CD8-positive, alpha-beta T cell (primary cell): ENCODE measurements at regions of chr21 and their contacts with region 1.

Region 1: DNA sequence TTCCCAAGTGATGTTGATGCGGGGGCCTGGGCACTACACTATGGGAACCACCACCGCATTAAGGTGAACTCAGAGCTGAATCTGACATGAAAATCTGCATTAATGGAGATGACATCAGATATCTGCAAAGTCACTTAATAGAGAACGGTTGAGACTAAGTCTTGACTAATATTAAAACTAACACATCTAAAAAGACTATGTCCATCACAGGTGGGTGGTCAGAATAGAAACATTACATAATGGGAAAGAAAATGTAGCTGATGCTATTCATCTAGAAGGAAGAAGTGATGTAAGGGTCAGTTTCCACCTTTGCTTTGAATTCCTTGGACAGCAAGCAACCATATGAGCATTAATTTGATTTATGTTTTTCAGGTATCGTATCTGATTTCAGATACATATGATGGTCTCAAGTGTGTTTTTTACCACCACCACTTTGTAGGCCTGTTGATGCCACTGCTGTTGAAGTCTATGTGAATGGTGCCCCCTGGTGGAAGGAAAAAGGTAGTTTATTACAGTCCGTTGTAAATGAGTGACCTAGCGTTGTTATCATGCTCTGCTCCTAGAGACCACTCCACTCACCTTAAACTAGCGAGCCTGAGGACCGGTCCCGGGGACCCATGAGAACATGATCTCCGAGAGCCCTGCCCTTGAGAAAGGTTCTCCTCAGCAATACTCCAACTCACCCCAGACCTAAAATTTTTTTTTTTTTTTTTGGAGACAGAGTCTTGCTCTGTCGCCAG is 73.5 kb downstream of the BACH1 start:
- DNase-seq: peak in 8 of 9 experiments; percentile 26 to 83 (median 53)
- ATAC-seq: peak; percentile 79
- H3K4me3 ChIP-seq: no peak overlapping the region
- H3K4me3 Mint-ChIP-seq: no peak overlapping the region
- H3K27ac ChIP-seq: no peak overlapping the region
- H3K27ac Mint-ChIP-seq: no peak overlapping the region
- H3K4me1 ChIP-seq: peaks cover 9% of the 10 kb centered on the region
- H3K4me1 Mint-ChIP-seq: peaks cover 10% of the 10 kb centered on the region
- H3K27me3 ChIP-seq: no peaks in the 10 kb centered on the region
- H3K27me3 Mint-ChIP-seq: no peaks in the 10 kb centered on the region
- CTCF ChIP-seq: peak; percentile 63

Region 2: DNA sequence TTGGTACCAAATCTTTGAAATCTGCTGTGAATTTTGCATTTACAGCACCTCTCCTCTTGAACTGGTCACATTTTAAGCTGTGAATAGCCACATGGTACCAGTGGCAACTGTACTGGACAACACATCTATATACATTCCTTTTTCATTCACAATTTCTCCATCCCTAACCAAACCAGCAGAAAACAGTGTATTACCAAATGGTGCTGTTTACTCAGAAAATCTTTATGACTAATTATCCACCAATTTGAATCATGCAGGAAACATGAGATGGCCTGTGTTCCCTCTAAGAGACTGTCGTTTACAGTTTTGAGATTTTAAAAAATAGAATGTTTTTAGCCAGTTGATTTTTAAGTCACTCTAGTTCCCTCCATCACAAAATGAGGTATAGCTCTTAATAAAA is 281.2 kb before region 1 on chr21:
- CTCF ChIA-PET with region 1: interaction called, 31 read pairs
- POLR2A ChIA-PET with region 1: no interaction called
- intact Hi-C with region 1: loop called (anchors 1 kb)
- DNase-seq: no peak
- ATAC-seq: no peak
- H3K4me3 ChIP-seq: no peak overlapping the region
- H3K4me3 Mint-ChIP-seq: no peak overlapping the region
- H3K27ac ChIP-seq: no peak overlapping the region
- H3K27ac Mint-ChIP-seq: no peak overlapping the region
- H3K4me1 ChIP-seq: no peaks in the 10 kb centered on the region
- H3K4me1 Mint-ChIP-seq: no peaks in the 10 kb centered on the region
- H3K27me3 ChIP-seq: no peaks in the 10 kb centered on the region
- H3K27me3 Mint-ChIP-seq: no peaks in the 10 kb centered on the region
- CTCF ChIP-seq: no peak

Region 3: GRCh38 chr21:29232601-29233546 is 139.4 kb before region 1 on chr21:
- CTCF ChIA-PET with region 1: interaction called, 7 read pairs
- POLR2A ChIA-PET with region 1: no interaction called
- intact Hi-C with region 1: loop called (anchors 1 to 5 kb)
- DNase-seq: peak in 2 of 9 experiments; percentile 15 to 33
- ATAC-seq: no peak
- H3K4me3 ChIP-seq: no peak overlapping the region
- H3K4me3 Mint-ChIP-seq: no peak overlapping the region
- H3K27ac ChIP-seq: no peak overlapping the region
- H3K27ac Mint-ChIP-seq: no peak overlapping the region
- H3K4me1 ChIP-seq: no peaks in the 10 kb centered on the region
- H3K4me1 Mint-ChIP-seq: peaks cover 9% of the 10 kb centered on the region
- H3K27me3 ChIP-seq: no peaks in the 10 kb centered on the region
- H3K27me3 Mint-ChIP-seq: no peaks in the 10 kb centered on the region
- CTCF ChIP-seq: no peak

Region 4: DNA sequence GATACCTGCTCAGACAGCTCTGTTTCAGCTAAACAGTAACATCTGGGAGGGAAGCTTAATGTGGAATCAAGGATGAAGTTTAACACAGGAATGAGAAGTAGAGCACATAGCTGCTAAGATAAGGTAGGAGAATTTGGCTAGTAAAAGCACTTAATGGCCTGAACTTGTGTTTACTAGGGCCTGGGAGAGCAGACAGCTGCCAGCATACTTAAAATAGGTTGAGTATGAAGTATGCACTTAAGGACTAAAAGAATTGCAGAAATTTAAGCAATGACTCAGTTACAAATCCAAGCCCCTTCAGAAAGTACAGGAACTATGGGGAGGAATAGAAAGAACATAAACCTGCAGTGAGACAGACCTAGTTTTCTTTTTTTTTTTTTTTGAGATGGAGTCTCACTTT is 20.5 kb before region 1 on chr21:
- CTCF ChIA-PET with region 1: interaction called, 21 read pairs
- POLR2A ChIA-PET with region 1: interaction called, 3 read pairs
- intact Hi-C with region 1: no loop called
- DNase-seq: no peak
- ATAC-seq: no peak
- H3K4me3 ChIP-seq: no peak overlapping the region
- H3K4me3 Mint-ChIP-seq: no peak overlapping the region
- H3K27ac ChIP-seq: no peak overlapping the region
- H3K27ac Mint-ChIP-seq: no peak overlapping the region
- H3K4me1 ChIP-seq: peaks cover 8% of the 10 kb centered on the region
- H3K4me1 Mint-ChIP-seq: peaks cover 13% of the 10 kb centered on the region
- H3K27me3 ChIP-seq: no peaks in the 10 kb centered on the region
- H3K27me3 Mint-ChIP-seq: no peaks in the 10 kb centered on the region
- CTCF ChIP-seq: no peak

Region 5: DNA sequence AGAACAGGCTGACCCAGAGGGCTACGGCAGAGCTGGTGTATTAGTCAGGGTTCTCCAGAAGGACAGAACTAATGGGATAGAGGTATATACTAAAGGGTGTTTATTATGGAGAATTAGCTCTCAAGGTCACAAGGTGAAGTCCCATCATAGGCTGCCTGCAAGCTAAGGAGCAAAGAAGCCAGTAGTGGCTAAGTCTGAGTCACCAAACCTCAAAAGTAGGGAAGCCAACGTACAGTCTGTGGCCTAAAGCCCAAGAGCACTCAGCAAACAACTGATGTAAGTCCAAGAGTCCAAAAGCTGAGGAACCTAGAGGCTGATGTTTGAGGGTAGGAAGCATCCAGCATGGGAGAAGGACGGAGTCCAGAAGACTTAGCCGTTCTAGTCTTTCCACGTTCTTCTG is 105.7 kb after region 1 on chr21:
- CTCF ChIA-PET with region 1: interaction called, 5 read pairs
- POLR2A ChIA-PET with region 1: no interaction called
- intact Hi-C with region 1: loop called in 1 of 2 experiments (anchors 5 kb)
- DNase-seq: no peak
- ATAC-seq: no peak
- H3K4me3 ChIP-seq: no peak overlapping the region
- H3K4me3 Mint-ChIP-seq: no peak overlapping the region
- H3K27ac ChIP-seq: no peak overlapping the region
- H3K27ac Mint-ChIP-seq: no peak overlapping the region
- H3K4me1 ChIP-seq: no peaks in the 10 kb centered on the region
- H3K4me1 Mint-ChIP-seq: peaks cover 19% of the 10 kb centered on the region
- H3K27me3 ChIP-seq: no peaks in the 10 kb centered on the region
- H3K27me3 Mint-ChIP-seq: no peaks in the 10 kb centered on the region
- CTCF ChIP-seq: no peak